ENCODE measurements at regions of chr1 and their contacts with region 1.

Region 1: GRCh38 chr1:8739377-8739776 is 78.1 kb downstream of the RERE start:
- DNase-seq: no peak
- ATAC-seq: no peak
- H3K4me3 ChIP-seq: no peak overlapping the region
- H3K27ac ChIP-seq: no peak overlapping the region
- H3K4me1 ChIP-seq: peaks cover 0 to 16% (median 10%) of the 10 kb centered on the region in 3 donors
- H3K27me3 ChIP-seq: no peaks in the 10 kb centered on the region
- CTCF ChIP-seq: no peak

Region 2: DNA sequence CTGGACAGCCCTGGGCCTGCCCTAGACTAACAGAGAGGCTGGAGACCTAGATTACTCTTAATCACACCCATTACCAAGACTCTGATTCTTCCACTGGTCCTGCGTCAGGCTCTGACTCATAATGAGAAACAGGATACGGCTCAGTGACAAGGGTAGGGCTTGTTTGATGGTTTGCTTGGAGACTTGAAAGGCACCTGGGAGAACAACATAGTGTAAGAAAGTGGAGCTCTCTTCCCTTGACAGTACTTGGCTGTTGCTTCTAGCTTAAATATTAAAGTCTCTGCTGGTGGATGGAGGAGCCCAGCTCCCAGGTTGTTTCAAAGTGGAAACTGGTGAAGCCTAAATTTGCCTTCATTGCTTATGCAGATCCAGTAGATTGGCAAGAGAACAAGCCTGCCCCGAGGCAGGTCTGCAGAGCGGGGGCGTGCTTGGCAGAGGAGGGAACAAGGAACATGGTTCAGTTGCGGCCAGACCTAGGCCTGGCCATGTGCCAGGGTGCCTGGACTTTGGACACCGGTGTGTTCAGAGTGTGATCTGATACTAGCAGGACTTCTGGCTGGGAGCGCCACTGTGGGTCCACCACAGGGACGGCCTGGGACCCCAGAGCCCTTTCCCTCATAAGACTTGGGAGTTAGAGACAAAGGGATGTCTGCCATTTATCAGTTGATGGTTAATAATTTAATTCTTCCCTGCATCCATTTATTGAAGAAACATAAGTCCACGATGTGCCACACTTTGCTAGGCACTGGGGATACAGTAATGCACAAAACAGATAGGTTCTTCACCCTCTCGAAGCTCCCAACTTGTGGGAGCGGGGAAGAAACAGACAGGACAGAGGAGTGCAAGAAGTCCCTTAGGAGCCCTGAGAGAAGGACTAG is 1473.4 kb before region 1 on chr1:
- intact Hi-C with region 1: no loop called
- DNase-seq: peak; percentile 85 to 96 (median 90)
- ATAC-seq: peak; percentile 93 to 96 (median 95)
- H3K4me3 ChIP-seq: no peak overlapping the region
- H3K27ac ChIP-seq: peak overlapping the region in 3 of 4 donors; percentile 13 to 58 (median 22)
- H3K4me1 ChIP-seq: peaks cover 9 to 31% (median 11%) of the 10 kb centered on the region in 3 donors
- H3K27me3 ChIP-seq: no peaks in the 10 kb centered on the region
- CTCF ChIP-seq: no peak

Region 3: GRCh38 chr1:8364528-8365442 is 374.6 kb before region 1 on chr1:
- intact Hi-C with region 1: loop called in 1 of 3 experiments (anchors 10 kb)
- DNase-seq: no peak
- ATAC-seq: no peak
- H3K4me3 ChIP-seq: no peak overlapping the region
- H3K27ac ChIP-seq: no peak overlapping the region
- H3K4me1 ChIP-seq: peaks cover 8 to 10% (median 9%) of the 10 kb centered on the region in 3 donors
- H3K27me3 ChIP-seq: no peaks in the 10 kb centered on the region
- CTCF ChIP-seq: no peak

Region 4: DNA sequence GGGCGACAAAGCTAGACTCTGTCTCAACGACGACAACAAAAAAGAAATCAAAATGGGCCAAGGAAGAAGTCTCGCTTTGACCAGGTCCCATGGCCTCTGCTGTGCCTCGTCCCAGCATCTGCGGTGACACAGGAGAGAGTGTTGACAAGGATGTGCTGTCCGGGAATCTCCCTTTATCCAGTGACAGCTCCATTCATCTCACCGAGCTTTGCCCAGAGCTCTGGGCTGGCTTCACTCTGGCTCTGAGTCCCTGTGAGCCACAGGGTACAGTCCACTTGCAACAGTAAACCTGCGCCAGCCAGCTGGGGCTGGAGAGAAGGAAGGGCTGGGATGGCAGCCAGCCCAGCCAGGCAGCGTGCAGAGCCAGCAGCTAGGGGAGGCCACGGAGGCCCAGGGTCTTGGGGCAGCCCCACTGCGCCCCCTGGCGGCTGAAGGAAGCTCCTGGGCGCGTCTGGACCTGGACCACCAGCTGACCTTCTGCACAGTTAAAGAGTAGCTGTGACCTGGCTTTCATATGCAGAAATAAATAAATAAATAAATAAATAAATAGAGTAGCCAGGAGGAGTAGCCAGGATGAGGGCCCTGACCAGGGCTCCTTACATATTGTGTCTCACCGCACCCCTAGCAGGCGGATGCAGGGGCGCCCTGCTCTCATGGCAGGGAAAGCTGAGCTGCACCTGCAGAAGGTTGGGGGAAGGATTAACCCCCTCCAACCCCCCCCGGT is 109.4 kb after region 1 on chr1:
- intact Hi-C with region 1: loop called in 1 of 3 experiments (anchors 10 kb)
- DNase-seq: peak; percentile 91 to 98 (median 94)
- ATAC-seq: peak; percentile 97 to 99 (median 99)
- H3K4me3 ChIP-seq: no peak overlapping the region
- H3K27ac ChIP-seq: peak overlapping the region in 3 of 4 donors; percentile 17 to 72 (median 71)
- H3K4me1 ChIP-seq: peaks cover 8 to 12% (median 9%) of the 10 kb centered on the region in 3 donors
- H3K27me3 ChIP-seq: no peaks in the 10 kb centered on the region
- CTCF ChIP-seq: peak; percentile 86 to 96 (median 95)

Measured in pancreas (tissue), 10 donors.